PC-3 (cell line): ENCODE measurements at regions of chr14 and their contacts with region 1.

Region 1: GRCh38 chr14:50773632-50774541 is 57.1 kb downstream of the NIN start:
- DNase-seq: peak; percentile 91
- ATAC-seq: peak; percentile 58
- H3K4me3 ChIP-seq: no peak overlapping the region
- H3K27ac ChIP-seq: 0 out of 2 replicates have a peak overlapping the region, but pooled peaks have one; percentile 83
- H3K4me1 ChIP-seq: peaks cover 55% of the 10 kb centered on the region
- H3K27me3 ChIP-seq: no peaks in the 10 kb centered on the region
- CTCF ChIP-seq: peak; percentile 99

Region 2: DNA sequence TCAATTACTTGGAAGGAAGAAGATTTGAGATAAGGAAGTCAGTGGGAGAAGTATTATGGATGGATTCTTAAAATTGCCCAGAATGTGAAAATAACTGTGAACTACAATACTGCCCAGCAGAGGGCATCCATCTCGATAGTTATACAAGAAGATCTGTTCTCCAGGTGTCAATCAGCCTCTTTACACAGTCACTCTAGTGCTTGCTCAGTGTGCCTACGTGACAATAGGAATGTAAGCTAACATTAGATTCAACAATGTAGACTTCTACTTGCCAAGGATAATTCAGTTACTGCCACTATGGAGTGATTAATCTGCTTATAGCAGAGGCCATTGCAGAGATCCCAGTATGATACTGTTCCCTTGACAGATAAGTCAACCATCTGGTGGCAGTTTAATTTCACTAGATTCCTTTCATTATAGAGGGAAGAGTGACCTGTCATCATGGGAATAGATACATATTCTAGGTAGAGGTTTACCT is 230.9 kb before region 1 on chr14:
- CTCF ChIA-PET with region 1: interaction called, 10 read pairs
- POLR2A ChIA-PET with region 1: no interaction called
- intact Hi-C with region 1: loop called (anchors 1 kb)
- DNase-seq: peak; percentile 87
- ATAC-seq: peak; percentile 82
- H3K4me3 ChIP-seq: no peak overlapping the region
- H3K27ac ChIP-seq: no peak overlapping the region
- H3K4me1 ChIP-seq: peaks cover 16% of the 10 kb centered on the region
- H3K27me3 ChIP-seq: no peaks in the 10 kb centered on the region
- CTCF ChIP-seq: peak; percentile 91

Region 3: DNA sequence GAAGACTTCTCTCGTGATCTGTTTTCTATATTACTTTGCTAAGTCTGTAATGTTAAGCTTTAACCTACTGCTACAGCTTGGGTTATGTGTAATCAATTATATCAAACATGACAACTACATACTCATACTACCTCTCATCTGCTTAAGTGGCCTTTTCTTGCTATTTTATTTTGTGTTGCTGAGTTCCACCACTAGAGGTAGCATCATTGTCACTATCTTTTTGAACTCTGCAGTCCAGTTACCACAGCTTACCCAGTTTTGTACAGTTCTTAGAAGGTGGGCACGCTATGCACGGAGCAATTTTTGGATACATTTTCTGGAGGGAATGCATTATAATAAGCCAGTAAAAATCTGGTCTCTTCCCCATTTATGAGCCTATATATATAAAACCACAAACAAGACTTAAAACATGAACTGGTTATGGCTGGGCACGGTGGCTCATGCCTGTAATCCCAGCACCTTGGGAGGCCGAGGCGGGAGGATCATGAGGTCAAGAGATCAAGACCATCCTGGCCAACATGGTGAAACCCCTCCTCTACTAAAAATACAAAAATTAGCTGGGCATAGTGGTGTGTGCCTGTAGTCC is 154.2 kb before region 1 on chr14:
- CTCF ChIA-PET with region 1: interaction called, 17 read pairs
- POLR2A ChIA-PET with region 1: no interaction called
- intact Hi-C with region 1: loop called (anchors 1 kb)
- DNase-seq: peak; percentile 72
- ATAC-seq: peak; percentile 93
- H3K4me3 ChIP-seq: no peak overlapping the region
- H3K27ac ChIP-seq: no peak overlapping the region
- H3K4me1 ChIP-seq: peaks cover 8% of the 10 kb centered on the region
- H3K27me3 ChIP-seq: no peaks in the 10 kb centered on the region
- CTCF ChIP-seq: peak; percentile 89

Region 4: DNA sequence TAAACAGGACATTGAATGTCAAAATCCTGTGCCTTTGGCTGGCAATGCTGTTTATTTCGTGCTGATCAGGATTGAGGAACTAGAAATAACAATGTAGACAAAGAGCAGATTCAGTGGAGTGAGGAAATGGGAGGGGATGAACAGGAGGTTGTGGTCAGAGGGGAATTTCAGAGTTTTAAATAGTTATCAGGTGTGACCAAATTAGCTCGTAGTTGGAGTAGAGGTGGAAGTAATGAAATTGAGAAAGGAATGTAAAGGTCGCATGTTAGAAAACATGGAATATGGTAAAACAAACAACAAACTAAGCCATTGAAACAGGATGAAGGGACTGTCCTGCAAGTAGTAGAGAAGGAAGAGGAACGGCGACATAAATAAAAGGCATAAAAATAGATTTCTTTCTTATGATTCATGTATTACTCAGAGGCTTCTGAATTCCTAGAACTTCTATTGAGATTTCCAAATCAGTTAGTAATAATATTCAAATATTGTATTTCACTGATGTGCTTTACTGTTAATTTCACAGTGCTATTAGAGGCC is 96.3 kb before region 1 on chr14:
- CTCF ChIA-PET with region 1: interaction called, 6 read pairs
- POLR2A ChIA-PET with region 1: interaction called, 6 read pairs
- intact Hi-C with region 1: loop called (anchors 1 kb)
- DNase-seq: peak; percentile 88
- ATAC-seq: peak; percentile 91
- H3K4me3 ChIP-seq: peak overlapping the region; percentile 54
- H3K27ac ChIP-seq: peak overlapping the region; percentile 80
- H3K4me1 ChIP-seq: peaks cover 44% of the 10 kb centered on the region
- H3K27me3 ChIP-seq: no peaks in the 10 kb centered on the region
- CTCF ChIP-seq: no peak

Region 5: DNA sequence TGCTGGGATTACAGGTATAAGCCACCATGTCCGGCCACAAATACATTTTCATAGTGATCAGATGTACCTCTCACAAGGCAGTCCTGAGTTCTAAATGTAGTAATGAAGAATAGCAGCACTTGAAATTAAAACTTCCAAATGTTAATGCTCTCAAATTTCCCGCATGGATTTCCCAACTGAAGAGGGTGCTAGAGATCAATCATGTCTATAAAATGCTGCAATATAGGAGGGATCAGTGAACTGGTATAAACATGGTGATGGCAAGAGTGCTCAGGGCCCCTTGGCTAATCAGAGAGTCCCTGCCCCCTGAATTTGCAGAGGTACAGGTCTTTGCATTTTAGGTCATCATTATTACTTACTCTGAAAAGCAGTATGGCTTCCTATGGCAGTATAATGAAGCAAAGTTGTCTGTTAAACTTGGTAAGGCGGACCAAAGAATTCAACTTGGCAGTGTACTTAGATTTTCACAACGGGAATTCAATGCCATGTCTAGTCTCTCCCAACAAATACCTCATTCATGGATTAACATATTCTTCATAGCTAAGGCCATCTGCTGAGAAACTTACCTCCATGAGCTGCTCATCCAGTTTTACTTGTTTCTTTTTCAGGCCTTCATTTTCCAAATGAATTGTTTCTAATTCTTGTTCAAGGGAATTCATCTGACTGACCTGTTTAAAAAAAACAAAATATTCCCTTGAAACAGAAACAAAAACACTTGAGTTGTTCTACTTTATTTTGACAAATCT is 38.8 kb before region 1 on chr14:
- CTCF ChIA-PET with region 1: interaction called, 3 read pairs
- POLR2A ChIA-PET with region 1: no interaction called
- intact Hi-C with region 1: loop called (anchors 1 kb)
- DNase-seq: peak; percentile 54
- ATAC-seq: peak; percentile 53
- H3K4me3 ChIP-seq: no peak overlapping the region
- H3K27ac ChIP-seq: peak overlapping the region; percentile 2; the same call in 1 of the 2 replicates
- H3K4me1 ChIP-seq: peaks cover 10% of the 10 kb centered on the region
- H3K27me3 ChIP-seq: no peaks in the 10 kb centered on the region
- CTCF ChIP-seq: peak; percentile 54

Region 6: GRCh38 chr14:50762001-50762930 is 11.6 kb before region 1 on chr14:
- CTCF ChIA-PET with region 1: interaction called, 22 read pairs
- POLR2A ChIA-PET with region 1: interaction called, 9 read pairs
- intact Hi-C with region 1: loop called (anchors 1 kb)
- DNase-seq: peak; percentile 86
- ATAC-seq: peak; percentile 36
- H3K4me3 ChIP-seq: peak overlapping the region; percentile 25; the same call in 1 of the 2 replicates
- H3K27ac ChIP-seq: peak overlapping the region; percentile 94
- H3K4me1 ChIP-seq: peaks cover 29% of the 10 kb centered on the region
- H3K27me3 ChIP-seq: no peaks in the 10 kb centered on the region
- CTCF ChIP-seq: no peak